BJ (cell line): ENCODE measurements at regions of chr5 and their contacts with region 1.

Region 1: GRCh38 chr5:35926389-35927051 is 11.9 kb downstream of the CAPSL start:
- DNase-seq: no peak
- H3K4me3 ChIP-seq: no peak overlapping the region
- H3K27me3 ChIP-seq: no peaks in the 10 kb centered on the region
- CTCF ChIP-seq: peak; percentile 73

Region 2: DNA sequence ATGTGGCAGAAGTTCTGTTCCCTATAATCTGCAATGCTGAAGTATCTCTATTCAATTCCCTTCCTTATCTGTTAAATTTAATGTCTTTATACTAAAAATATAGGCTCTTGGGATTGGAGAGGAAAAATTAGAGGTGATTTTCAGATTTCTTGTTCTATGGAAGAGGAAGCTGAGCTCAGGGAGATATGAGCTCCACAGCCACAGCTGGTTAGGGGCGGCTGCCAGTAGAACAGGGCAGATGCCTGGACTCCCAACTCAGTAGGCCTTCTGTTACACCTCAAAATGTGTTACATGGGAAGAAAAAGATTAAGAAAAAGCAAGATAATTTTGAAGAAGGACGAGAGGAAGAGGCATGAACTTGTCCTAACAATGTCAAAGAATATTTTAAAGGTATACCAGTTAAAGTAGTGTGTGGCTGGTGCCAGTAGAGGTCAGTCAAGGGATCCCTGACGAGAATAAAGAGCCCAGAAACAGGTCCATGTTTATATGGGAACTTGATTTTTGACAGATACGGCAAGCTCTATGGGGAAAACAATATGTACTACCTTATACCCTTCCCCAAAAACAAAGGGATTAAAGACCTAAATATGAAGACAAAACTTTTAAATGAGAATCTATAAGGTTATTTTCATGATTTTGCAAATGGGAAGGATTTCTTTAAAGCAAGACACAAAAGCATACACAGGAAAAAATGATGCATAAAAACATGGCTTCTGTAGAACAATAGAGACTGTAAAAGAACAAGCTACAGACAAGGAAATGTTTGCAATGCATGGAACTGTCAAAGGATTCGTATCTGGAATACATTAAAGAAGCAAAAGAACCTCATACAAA is 968.4 kb before region 1 on chr5:
- CTCF ChIA-PET with region 1: interaction called, 10 read pairs
- POLR2A ChIA-PET with region 1: no interaction called
- DNase-seq: no peak
- H3K4me3 ChIP-seq: no peak overlapping the region
- H3K27me3 ChIP-seq: no peaks in the 10 kb centered on the region
- CTCF ChIP-seq: peak; percentile 70

Region 3: DNA sequence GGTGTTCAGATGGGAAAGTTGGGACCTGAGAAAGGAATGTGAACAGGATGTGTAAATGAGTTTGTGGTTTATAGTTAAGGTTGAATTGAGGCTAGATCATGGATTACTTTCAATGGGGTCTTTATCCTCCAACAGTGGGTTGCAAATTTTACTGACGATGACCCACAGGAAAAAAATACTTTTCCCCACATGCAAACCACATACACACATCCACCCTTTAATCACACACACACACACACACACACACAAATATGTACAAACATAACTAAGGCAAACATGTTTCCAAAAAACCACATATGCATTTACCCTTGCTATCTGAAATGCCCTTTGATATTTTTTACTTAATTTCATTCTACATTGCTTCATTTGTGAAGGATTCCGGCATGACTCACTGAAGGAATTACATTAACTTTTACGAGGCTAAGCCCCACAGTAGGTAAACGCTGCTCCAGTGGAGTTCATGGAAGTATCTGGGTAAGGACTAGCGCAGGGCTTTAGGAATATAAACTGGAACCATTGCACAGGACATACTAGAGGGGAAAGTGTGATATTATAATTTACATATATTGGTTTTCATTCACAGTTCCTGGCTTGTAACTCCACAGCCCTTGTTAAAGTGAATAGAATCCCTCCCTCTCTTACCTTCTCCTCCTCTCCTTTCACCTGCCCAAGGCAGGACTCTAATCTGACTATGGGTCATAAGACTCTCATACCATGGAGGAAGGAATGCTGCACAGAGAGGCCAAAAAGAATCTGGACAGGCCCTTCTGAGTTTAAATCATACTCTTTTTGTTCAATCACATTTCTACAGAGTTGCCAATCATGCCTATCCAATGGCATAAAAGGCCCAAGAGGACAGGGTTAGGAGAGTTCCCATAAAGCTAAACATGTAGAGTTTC is 317.4 kb before region 1 on chr5:
- CTCF ChIA-PET with region 1: interaction called, 12 read pairs
- POLR2A ChIA-PET with region 1: no interaction called
- DNase-seq: peak; percentile 26
- H3K4me3 ChIP-seq: no peak overlapping the region
- H3K27me3 ChIP-seq: no peaks in the 10 kb centered on the region
- CTCF ChIP-seq: no peak

Region 4: DNA sequence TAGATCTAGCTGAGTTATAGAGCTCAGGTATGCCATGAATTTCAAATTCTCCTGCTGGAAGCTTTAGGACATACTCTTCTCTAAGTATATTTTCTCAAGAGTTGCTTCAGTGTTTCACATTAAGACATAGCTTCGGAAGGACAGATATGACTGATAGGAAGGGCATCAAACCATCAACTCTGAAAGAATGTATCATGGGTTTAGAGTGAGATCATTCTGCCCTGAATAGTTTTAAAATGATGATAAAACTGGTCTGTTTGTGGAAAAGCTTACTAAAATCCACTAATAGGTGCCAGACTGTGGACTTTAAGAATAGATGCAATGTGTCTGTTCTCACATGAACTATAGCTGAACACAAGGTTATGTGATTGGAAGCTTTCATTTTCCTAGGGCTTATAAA is 300.4 kb before region 1 on chr5:
- CTCF ChIA-PET with region 1: interaction called, 25 read pairs
- POLR2A ChIA-PET with region 1: no interaction called
- DNase-seq: peak; percentile 13
- H3K4me3 ChIP-seq: no peak overlapping the region
- H3K27me3 ChIP-seq: no peaks in the 10 kb centered on the region
- CTCF ChIP-seq: no peak

Region 5: DNA sequence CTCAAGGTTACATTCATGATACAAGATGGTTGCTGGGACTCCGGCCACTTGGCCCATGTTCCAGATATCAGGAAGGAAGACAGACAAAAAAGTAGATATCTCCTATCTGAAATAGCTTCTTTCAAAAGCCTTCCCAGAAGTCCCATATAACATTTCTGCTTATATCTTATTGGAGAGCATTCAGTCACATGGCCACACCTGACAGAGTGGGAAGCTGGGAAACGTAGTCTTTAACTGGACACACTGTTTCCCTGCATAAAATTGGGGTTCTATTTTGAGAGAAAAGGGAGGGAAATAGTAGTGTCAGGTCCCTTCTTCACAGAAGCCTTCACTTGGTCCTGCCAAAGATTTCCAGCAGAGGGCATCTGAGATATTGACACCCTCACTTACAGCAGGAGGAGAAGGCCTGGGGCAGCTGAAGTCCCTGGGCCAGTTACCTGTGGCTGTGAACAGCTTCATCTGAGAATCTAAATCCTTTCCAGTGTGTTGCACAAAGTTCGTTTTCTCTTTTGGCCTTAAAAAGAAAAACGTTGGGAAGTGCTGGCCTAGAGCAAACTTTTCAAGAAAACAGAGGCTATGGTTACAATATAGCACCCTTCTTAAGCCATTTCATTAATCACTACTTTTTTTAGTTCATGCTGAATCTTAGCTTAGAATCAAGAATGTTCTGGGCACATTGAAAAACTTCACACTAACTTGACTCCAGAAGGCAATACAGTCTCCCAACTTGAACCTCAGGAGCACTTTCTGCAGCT is 275.3 kb before region 1 on chr5:
- CTCF ChIA-PET with region 1: interaction called, 119 read pairs
- POLR2A ChIA-PET with region 1: no interaction called
- DNase-seq: no peak
- H3K4me3 ChIP-seq: no peak overlapping the region
- H3K27me3 ChIP-seq: no peaks in the 10 kb centered on the region
- CTCF ChIP-seq: peak; percentile 73

Region 6: GRCh38 chr5:35857606-35858205 is 68.8 kb before region 1 on chr5:
- CTCF ChIA-PET with region 1: interaction called, 10 read pairs
- POLR2A ChIA-PET with region 1: no interaction called
- DNase-seq: peak; percentile 73
- H3K4me3 ChIP-seq: peak overlapping the region; percentile 30
- H3K27me3 ChIP-seq: no peaks in the 10 kb centered on the region
- CTCF ChIP-seq: no peak

Region 7: GRCh38 chr5:36079200-36079761 is 152.8 kb after region 1 on chr5:
- CTCF ChIA-PET with region 1: no interaction called
- POLR2A ChIA-PET with region 1: no interaction called
- DNase-seq: no peak
- H3K4me3 ChIP-seq: no peak overlapping the region
- H3K27me3 ChIP-seq: peaks cover 8% of the 10 kb centered on the region
- CTCF ChIP-seq: peak; percentile 78